ENCODE measurements at regions of chr19 and their contacts with region 1.

Region 1: GRCh38 chr19:35306473-35307246 is 14.7 kb downstream of the MAG start:
- DNase-seq: no peak
- H3K4me3 ChIP-seq: no peak overlapping the region
- H3K27ac ChIP-seq: peak overlapping the region in 1 of 2 donors; percentile 91
- H3K4me1 ChIP-seq: peaks cover 29% of the 10 kb centered on the region
- H3K27me3 ChIP-seq: no peaks in the 10 kb centered on the region
- CTCF ChIP-seq: no peak
- EP300 ChIP-seq: no peak
- POLR2A ChIP-seq: no peak

Region 2: DNA sequence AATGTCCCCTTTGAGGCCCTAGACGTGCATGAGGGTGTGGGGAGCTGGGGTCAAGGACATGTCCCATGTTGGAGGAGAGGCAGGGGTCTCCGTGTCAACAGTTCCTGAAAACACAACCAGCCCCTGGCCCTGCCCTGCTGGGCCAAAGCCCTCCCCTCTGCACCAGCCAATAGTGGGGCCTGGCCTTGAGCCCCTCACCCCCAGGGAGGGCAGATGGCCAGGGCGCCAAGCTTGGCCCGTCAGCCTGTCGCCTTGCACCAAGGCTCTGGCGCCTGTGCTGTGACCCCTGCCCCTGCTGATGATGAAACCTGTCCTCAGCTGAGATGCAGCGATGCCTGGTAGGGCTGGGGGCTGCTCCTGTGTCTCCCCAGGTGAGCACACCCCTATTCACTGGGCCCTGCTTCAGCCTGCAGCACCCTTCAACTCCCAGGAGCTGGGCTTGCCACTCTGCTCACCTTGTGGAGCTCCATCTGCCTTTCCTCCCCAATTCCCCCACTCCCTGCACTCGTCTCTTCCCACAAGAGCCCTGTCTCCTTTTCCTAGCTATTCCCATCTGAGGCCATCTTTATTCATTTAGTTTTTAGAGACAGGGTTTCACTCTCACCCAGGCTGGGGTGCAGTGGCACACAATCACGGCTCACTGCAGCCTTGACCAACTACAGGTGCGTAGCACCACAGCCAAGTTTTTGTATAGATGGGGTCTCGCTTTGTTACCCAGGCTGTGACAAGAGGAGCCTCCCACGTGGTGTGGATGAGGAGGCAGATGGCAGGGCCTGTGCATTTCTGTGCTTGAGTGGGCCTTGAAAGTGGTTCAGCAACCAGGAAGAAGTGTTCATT is 26.5 kb before region 1 on chr19:
- intact Hi-C with region 1: loop called in 1 of 4 experiments (anchors 2 kb)
- DNase-seq: peak in 4 of 5 donors; percentile 52 to 65 (median 60)
- H3K4me3 ChIP-seq: no peak overlapping the region
- H3K27ac ChIP-seq: peak overlapping the region; percentile 30 to 87
- H3K4me1 ChIP-seq: peaks cover 19% of the 10 kb centered on the region
- H3K27me3 ChIP-seq: no peaks in the 10 kb centered on the region
- CTCF ChIP-seq: no peak
- EP300 ChIP-seq: no peak
- POLR2A ChIP-seq: no peak

Region 3: DNA sequence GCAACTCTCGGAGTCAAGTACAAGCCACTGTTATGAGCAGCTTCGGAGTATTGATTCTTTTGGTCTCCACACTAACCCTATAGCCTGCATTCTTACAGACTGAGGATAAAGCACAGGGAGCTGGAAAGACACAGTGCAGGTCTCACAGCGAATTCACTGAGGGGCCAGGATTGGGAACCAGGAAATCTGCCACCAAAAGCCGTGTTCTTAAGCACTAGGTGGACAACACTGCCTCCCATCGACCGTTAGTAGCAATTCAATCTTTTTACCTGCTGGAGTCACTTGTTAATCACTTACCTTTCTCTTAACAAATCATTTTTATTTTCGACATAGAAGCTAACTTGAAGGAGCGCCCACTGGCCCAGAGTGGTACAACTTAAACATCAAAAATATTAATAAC is 285.6 kb after region 1 on chr19:
- intact Hi-C with region 1: no loop called
- DNase-seq: no peak
- H3K4me3 ChIP-seq: no peak overlapping the region
- H3K27ac ChIP-seq: no peak overlapping the region
- H3K4me1 ChIP-seq: no peaks in the 10 kb centered on the region
- H3K27me3 ChIP-seq: no peaks in the 10 kb centered on the region
- CTCF ChIP-seq: no peak
- EP300 ChIP-seq: no peak
- POLR2A ChIP-seq: no peak